ENCODE measurements at regions of chr11 and their contacts with region 1.

Region 1: DNA sequence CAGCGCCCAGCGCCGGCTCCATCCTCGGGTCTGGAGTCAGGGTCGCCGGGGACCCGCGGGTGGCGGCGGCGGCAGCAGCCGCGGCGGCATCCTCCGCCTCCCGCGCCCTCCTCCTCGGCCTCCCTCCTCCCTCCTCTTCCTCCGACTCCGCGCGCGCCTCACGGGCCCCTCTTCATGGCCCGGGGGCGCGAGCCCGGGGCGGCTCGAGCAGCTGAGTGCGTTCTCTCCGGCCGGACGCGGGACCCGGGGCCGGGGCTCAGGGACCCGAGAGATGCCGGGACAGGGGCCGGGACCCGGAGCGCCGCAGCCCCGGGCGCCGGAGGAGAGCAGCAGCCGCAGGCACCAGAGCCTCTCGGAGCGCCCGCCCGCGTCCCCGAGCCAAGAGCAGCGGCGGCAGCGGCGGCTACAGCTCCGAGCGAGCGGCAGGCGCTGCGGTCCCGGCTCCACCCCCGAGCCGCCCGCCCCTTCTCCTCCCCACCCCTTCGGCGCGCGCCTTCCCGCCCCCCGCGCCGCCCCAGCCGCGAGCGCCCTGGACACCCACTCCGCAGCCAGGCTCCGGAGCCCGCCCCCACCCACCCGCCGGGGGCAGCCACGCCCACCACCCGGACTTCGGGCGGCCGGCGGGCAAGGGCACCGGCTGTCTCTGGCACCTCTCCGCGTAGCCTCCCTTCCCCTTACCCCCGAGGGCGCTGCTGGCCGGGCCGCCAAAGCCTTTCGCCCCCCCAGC is at the start of gene CHST1:
- DNase-seq: no peak
- ATAC-seq: peak; percentile 66
- H3K4me3 Mint-ChIP-seq: no peak within 1 kb of the TSS
- H3K27ac Mint-ChIP-seq: no peak within 1 kb of the TSS
- H3K4me1 Mint-ChIP-seq: no peaks in the 10 kb centered on the region
- H3K27me3 Mint-ChIP-seq: peaks cover 70% of the 10 kb centered on the region
- total RNA-seq, gene CHST1: 0.35 TPM in 1 of 2 experiments, not detected in the other

Region 2: DNA sequence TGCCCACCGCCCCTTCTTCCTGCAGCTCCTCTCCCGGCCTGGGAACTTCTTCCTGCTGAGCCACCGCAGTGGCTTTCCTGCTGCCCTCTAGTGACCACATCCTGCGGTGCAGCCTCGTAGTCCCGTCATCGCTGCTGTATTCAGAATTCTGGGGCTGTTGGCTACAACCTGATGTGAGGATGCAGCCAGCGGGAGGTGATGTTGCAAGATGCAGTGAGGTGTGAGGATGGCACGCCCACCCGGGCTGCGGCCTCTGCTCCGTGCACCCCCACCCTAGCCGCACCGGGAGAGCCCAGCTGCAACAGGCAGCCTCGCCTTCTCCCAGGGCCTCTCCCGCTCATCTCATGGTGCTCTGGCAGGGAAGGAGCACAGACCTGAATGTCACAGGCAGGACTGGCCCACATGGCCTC is 10.0 kb before region 1 on chr11:
- CTCF ChIA-PET with region 1: interaction called, 24 read pairs
- DNase-seq: peak; percentile 66
- ATAC-seq: peak; percentile 59
- H3K4me3 Mint-ChIP-seq: no peak overlapping the region
- H3K27ac Mint-ChIP-seq: no peak overlapping the region
- H3K4me1 Mint-ChIP-seq: peaks cover 7% of the 10 kb centered on the region
- H3K27me3 Mint-ChIP-seq: peaks cover 35% of the 10 kb centered on the region

Region 3: DNA sequence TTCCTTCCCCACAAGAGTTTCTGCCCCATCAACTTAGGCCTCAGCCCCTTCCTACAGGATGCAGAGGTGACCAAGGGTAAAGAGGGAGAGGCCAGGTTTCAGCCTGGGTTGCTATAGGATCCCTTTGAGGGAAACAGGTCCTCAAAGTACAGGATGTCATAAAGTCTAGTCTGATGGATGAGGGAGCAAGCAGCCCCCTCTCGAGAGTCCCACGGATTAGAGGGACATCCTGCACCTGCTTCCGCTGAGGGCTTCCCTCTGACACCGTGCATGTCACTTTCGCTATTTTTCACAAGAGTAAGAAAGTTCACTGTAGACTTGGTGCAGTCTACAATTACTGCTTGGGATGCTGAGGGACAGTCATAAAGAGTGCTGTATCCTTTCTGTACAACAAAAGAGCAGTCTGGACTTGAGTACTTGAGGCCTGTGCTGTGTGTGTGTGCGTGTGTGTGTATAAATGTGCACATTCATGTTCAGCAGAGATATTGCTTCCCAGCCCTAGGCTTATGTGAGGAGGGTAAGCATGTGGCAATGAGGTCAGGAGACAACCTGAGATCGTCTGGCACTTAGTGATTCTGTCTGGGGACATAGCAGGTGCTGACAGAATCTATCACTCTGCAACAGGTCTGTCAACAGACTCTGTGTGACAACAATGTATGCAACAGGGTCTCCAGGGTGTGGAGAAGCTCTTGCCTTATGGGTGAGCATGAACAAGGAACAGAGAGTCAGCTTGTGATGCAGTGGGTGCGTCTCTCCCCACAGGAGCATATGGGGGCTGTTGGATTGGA is 18.1 kb after region 1 on chr11:
- CTCF ChIA-PET with region 1: no interaction called
- DNase-seq: no peak
- ATAC-seq: no peak
- H3K4me3 Mint-ChIP-seq: no peak overlapping the region
- H3K27ac Mint-ChIP-seq: no peak overlapping the region
- H3K4me1 Mint-ChIP-seq: no peaks in the 10 kb centered on the region
- H3K27me3 Mint-ChIP-seq: peaks cover 32% of the 10 kb centered on the region